ENCODE measurements at regions of chr14 and their contacts with region 1.

Region 1: GRCh38 chr14:20970983-20971704 is 15.9 kb downstream of the RNASE2 start:
- DNase-seq: peak; percentile 42 to 78
- H3K4me3 ChIP-seq: peak overlapping the region; percentile 57
- H3K27ac ChIP-seq: no peak overlapping the region
- H3K4me1 ChIP-seq: peaks cover 6% of the 10 kb centered on the region; the same call in 1 of the 2 replicates
- H3K27me3 ChIP-seq: no peaks in the 10 kb centered on the region
- CTCF ChIP-seq: peak; percentile 76

Region 2: GRCh38 chr14:20624495-20625070 is 346.6 kb before region 1 on chr14:
- CTCF ChIA-PET with region 1: no interaction called
- POLR2A ChIA-PET with region 1: no interaction called
- intact Hi-C with region 1: loop called (anchors 10 kb)
- DNase-seq: peak; percentile 34 to 81
- H3K4me3 ChIP-seq: peak overlapping the region; percentile 67
- H3K27ac ChIP-seq: peak overlapping the region; percentile 38; the same call in 1 of the 2 replicates
- H3K4me1 ChIP-seq: no peaks in the 10 kb centered on the region
- H3K27me3 ChIP-seq: no peaks in the 10 kb centered on the region
- CTCF ChIP-seq: no peak

Region 3: DNA sequence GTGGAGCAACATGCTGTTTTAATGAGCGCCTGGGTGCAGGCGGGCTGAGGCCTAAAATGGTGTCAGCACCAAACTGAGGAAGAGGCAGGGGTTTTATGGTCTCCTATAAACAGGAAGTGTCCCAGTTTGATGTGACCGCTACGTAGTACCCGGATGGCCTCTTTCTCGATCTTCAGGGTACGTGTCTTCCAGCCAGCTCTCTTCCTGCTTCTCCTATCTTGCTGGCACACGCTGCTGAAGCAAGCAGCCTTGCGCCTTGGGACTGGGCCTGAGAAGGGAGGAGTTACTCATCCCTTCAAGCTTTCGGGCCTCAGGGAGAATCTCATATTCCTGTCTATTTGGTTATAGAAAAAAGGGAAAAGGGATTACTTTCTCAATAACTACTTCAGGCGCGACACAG is 140.3 kb before region 1 on chr14:
- CTCF ChIA-PET with region 1: no interaction called
- POLR2A ChIA-PET with region 1: no interaction called
- intact Hi-C with region 1: no loop called
- DNase-seq: no peak
- H3K4me3 ChIP-seq: no peak overlapping the region
- H3K27ac ChIP-seq: no peak overlapping the region
- H3K4me1 ChIP-seq: no peaks in the 10 kb centered on the region
- H3K27me3 ChIP-seq: no peaks in the 10 kb centered on the region
- CTCF ChIP-seq: no peak

Region 4: DNA sequence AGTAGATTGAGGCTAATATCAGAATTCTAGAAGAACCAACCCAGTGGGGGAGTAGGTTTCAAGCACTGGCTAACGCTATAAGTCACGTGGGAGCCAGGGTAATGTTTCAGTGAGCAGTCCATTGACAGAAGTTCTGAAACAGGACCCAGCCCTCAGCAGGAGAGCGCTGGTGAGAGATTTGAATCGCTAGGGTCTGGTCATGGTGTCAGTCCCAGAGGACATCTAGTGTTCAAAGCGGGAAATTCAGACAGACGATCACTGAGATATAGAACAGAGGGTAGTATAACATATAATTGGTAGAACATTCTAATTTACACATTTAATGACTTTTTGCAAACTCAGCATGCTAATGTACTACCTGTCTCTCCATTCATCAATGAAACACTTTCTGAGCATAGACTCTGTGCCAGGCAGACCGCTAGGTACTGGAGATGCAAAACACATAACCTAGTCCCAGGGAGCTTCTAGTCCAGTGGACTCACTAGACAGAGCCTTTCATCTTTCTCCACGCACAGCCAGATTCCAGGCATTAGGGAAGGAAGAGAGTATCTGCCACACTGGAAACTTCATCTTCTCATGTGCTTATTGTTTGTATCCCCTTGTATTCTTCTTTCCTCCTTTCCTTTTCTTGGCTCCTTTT is 115.4 kb before region 1 on chr14:
- CTCF ChIA-PET with region 1: interaction called, 10 read pairs
- POLR2A ChIA-PET with region 1: no interaction called
- intact Hi-C with region 1: loop called (anchors 1 kb)
- DNase-seq: peak in 1 of 2 experiments; percentile 33
- H3K4me3 ChIP-seq: no peak overlapping the region
- H3K27ac ChIP-seq: no peak overlapping the region
- H3K4me1 ChIP-seq: no peaks in the 10 kb centered on the region
- H3K27me3 ChIP-seq: peaks cover 6% of the 10 kb centered on the region; the same call in 1 of the 2 replicates
- CTCF ChIP-seq: peak; percentile 65

Region 5: DNA sequence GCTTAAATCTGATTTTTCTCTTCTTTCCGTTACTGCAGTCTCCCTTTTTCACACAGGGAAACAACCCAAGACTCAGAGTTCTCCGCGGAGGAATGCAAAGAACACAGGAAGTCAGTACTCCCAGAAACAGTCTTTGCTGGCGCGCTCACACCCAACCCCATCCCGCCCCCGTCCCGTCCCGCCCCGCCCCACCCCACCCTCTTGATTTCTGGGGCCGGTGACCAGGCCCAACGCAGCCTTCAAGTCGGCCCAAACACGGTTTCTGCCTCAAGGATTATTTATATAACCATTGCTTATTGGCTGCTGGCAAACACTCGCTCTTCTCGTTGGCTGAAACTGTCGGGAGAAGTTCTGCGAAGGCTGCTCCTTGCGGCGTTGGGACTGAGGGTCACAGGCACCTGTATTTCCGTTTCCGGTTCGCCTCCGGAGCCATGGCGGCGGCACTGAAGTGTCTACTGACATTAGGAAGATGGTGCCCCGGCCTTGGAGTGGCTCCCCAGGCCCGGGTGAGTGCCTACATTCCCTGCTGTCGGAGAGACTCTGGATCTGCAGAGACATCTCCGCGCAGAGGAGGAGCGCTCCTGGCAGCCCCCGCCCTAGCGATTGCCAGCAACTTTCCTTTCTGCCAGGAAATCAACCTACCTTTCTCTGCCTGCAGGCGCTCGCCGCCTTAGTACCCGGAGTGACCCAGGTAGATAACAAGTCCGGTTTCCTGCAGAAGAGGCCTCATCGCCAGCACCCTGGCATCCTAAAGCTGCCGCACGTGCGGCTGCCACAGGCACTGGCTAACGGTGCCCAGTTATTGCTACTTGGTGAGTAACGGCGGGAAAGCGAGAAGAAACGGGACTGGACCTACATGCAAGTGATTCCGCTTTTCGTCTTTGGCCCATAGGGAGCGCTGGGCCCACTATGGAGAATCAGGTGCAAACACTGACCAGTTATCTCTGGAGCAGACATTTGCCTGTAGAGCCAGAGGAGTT is 18.7 kb after region 1 on chr14 and contains the start of gene METTL17:
- CTCF ChIA-PET with region 1: no interaction called
- POLR2A ChIA-PET with region 1: interaction called, 3 read pairs
- intact Hi-C with region 1: loop called (anchors 2 kb)
- DNase-seq: peak; percentile 68 to 88
- H3K4me3 ChIP-seq: peak within 1 kb of the TSS; percentile 93
- H3K27ac ChIP-seq: peak within 1 kb of the TSS; percentile 67
- H3K4me1 ChIP-seq: peaks cover 24% of the 10 kb centered on the region
- H3K27me3 ChIP-seq: no peaks in the 10 kb centered on the region
- CTCF ChIP-seq: peak; percentile 47; the same call in 1 of the 2 replicates
- total RNA-seq, gene METTL17: 40.9 and 51.2 TPM in 2 replicates

Region 6: GRCh38 chr14:21024585-21025370 is 53.6 kb after region 1 on chr14 and contains the start of gene NDRG2:
- CTCF ChIA-PET with region 1: interaction called, 10 read pairs
- POLR2A ChIA-PET with region 1: no interaction called
- intact Hi-C with region 1: no loop called
- DNase-seq: peak in 1 of 2 experiments; percentile 56
- H3K4me3 ChIP-seq: peak within 1 kb of the TSS; percentile 59
- H3K27ac ChIP-seq: no peak within 1 kb of the TSS
- H3K4me1 ChIP-seq: 0 out of 2 replicates have a peak, but pooled peaks cover 6% of the 10 kb centered on the region
- H3K27me3 ChIP-seq: no peaks in the 10 kb centered on the region
- CTCF ChIP-seq: no peak
- total RNA-seq, gene NDRG2: 12.2 and 14.6 TPM in 2 replicates

Measured in PC-9 (cell line).